ENCODE measurements at regions of chr10 and their contacts with region 1.

Region 1: GRCh38 chr10:114470956-114471905 is 66.9 kb upstream of the AFAP1L2 start:
- DNase-seq: peak; percentile 65 to 67 (median 66)
- H3K4me3 ChIP-seq: no peak overlapping the region
- H3K4me3 Mint-ChIP-seq: peak overlapping the region in 1 of 8 donors; percentile 18
- H3K27ac ChIP-seq: no peak overlapping the region
- H3K27ac Mint-ChIP-seq: peak overlapping the region; percentile 22 to 76 (median 47)
- H3K4me1 ChIP-seq: peaks cover 5% of the 10 kb centered on the region
- H3K4me1 Mint-ChIP-seq: peaks cover 13 to 24% (median 18%) of the 10 kb centered on the region in 4 donors
- H3K27me3 ChIP-seq: no peaks in the 10 kb centered on the region
- H3K27me3 Mint-ChIP-seq: no peaks in the 10 kb centered on the region

Region 2: DNA sequence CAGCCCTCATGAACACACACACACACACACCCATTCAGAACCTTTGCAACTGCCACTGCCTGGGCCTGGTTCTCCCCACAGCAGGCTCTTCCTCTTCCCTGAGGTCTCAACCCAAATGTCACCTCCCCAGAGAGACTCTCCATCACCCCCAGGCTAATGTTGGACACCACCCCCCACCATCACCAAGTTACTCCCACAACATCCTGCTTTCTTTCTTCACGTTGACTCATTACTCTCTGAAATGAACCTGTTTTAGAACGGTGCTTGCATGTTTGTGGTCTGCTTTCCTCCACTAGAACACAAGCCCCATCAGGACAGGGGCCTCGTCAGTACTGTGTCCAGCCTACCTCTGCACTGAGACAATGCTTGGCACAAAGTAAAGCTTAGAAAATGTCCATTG is 83.0 kb before region 1 on chr10:
- CTCF ChIA-PET with region 1: no interaction called
- POLR2A ChIA-PET with region 1: no interaction called
- intact Hi-C with region 1: no loop called
- DNase-seq: no peak
- H3K4me3 ChIP-seq: no peak overlapping the region
- H3K4me3 Mint-ChIP-seq: no peak overlapping the region
- H3K27ac ChIP-seq: no peak overlapping the region
- H3K27ac Mint-ChIP-seq: no peak overlapping the region
- H3K4me1 ChIP-seq: no peaks in the 10 kb centered on the region
- H3K4me1 Mint-ChIP-seq: peaks cover 0 to 2% (median 0%) of the 10 kb centered on the region in 4 donors
- H3K27me3 ChIP-seq: no peaks in the 10 kb centered on the region
- H3K27me3 Mint-ChIP-seq: peaks cover 17 to 22% of the 10 kb centered on the region in 2 donors

Region 3: GRCh38 chr10:114431414-114432135 is 39.7 kb before region 1 on chr10:
- CTCF ChIA-PET with region 1: no interaction called
- POLR2A ChIA-PET with region 1: no interaction called
- intact Hi-C with region 1: no loop called
- DNase-seq: no peak
- H3K4me3 ChIP-seq: no peak overlapping the region
- H3K4me3 Mint-ChIP-seq: no peak overlapping the region
- H3K27ac ChIP-seq: no peak overlapping the region
- H3K27ac Mint-ChIP-seq: peak overlapping the region in 3 of 7 donors; percentile 14 to 58 (median 18)
- H3K4me1 ChIP-seq: no peaks in the 10 kb centered on the region
- H3K4me1 Mint-ChIP-seq: peaks cover 0 to 3% (median 0%) of the 10 kb centered on the region in 4 donors
- H3K27me3 ChIP-seq: no peaks in the 10 kb centered on the region
- H3K27me3 Mint-ChIP-seq: no peaks in the 10 kb centered on the region

Region 4: GRCh38 chr10:114458955-114459354 is 12.3 kb before region 1 on chr10:
- CTCF ChIA-PET with region 1: interaction called, 19 read pairs
- POLR2A ChIA-PET with region 1: no interaction called
- intact Hi-C with region 1: no loop called
- DNase-seq: no peak
- H3K4me3 ChIP-seq: no peak overlapping the region
- H3K4me3 Mint-ChIP-seq: no peak overlapping the region
- H3K27ac ChIP-seq: no peak overlapping the region
- H3K27ac Mint-ChIP-seq: no peak overlapping the region
- H3K4me1 ChIP-seq: no peaks in the 10 kb centered on the region
- H3K4me1 Mint-ChIP-seq: peaks cover 2 to 5% (median 5%) of the 10 kb centered on the region in 4 donors
- H3K27me3 ChIP-seq: no peaks in the 10 kb centered on the region
- H3K27me3 Mint-ChIP-seq: no peaks in the 10 kb centered on the region

Region 5: DNA sequence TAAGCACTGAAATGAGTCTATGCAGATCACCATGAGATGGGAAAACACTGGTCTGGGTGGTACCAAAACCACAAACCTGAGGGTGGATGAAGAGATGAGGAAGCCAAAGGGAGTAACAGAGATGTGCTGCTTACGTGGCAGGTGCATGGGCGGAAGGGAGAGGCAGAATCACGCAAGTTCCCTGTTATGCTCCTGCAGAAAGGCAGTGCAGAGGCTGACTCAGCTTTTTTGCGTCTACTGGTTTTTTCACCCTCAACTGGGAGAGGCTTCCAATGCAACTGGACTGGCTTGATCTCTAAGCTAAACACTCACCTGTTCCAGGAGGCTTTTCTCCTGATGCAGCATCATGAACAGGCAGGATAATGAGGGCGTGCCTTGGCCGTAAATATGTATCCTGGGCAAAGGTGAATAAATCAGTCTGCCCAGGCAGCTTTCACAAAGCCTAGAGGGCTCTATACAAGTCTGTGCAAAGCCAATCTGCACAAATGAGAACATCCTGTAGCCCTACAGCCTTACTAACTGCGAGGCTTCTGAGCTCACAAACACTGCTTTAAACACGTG is 28.5 kb after region 1 on chr10:
- CTCF ChIA-PET with region 1: interaction called, 13 read pairs
- POLR2A ChIA-PET with region 1: no interaction called
- intact Hi-C with region 1: no loop called
- DNase-seq: peak; percentile 44 to 70 (median 59)
- H3K4me3 ChIP-seq: no peak overlapping the region
- H3K4me3 Mint-ChIP-seq: peak overlapping the region; percentile 36 to 75 (median 57)
- H3K27ac ChIP-seq: peak overlapping the region; percentile 49
- H3K27ac Mint-ChIP-seq: peak overlapping the region; percentile 70 to 93 (median 87)
- H3K4me1 ChIP-seq: peaks cover 82% of the 10 kb centered on the region
- H3K4me1 Mint-ChIP-seq: peaks cover 63 to 94% (median 82%) of the 10 kb centered on the region in 4 donors
- H3K27me3 ChIP-seq: no peaks in the 10 kb centered on the region
- H3K27me3 Mint-ChIP-seq: no peaks in the 10 kb centered on the region

Region 6: DNA sequence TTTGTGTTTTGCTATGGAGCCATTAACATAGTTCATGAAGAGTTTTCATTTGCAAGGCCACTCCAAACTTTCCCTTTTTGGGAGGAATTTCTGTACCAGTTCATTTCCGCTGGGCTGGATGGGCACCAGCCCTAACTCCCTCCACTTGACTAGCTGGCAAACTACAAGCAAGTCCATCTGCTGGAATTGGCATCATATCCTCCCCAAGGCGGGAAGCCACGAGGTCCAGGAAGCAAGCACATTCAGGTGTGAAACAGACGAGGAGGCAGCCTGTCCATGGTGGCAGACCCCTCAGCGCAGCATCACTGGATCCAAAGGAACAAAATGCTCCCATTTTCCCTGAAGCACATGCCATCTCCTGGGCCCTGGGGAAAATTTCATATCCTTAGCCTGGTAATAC is 61.0 kb after region 1 on chr10:
- CTCF ChIA-PET with region 1: interaction called, 62 read pairs
- POLR2A ChIA-PET with region 1: interaction called, 18 read pairs
- intact Hi-C with region 1: no loop called
- DNase-seq: no peak
- H3K4me3 ChIP-seq: no peak overlapping the region
- H3K4me3 Mint-ChIP-seq: no peak overlapping the region
- H3K27ac ChIP-seq: no peak overlapping the region
- H3K27ac Mint-ChIP-seq: no peak overlapping the region
- H3K4me1 ChIP-seq: peaks cover 19% of the 10 kb centered on the region
- H3K4me1 Mint-ChIP-seq: peaks cover 4 to 25% (median 17%) of the 10 kb centered on the region in 4 donors
- H3K27me3 ChIP-seq: no peaks in the 10 kb centered on the region
- H3K27me3 Mint-ChIP-seq: no peaks in the 10 kb centered on the region

Region 7: DNA sequence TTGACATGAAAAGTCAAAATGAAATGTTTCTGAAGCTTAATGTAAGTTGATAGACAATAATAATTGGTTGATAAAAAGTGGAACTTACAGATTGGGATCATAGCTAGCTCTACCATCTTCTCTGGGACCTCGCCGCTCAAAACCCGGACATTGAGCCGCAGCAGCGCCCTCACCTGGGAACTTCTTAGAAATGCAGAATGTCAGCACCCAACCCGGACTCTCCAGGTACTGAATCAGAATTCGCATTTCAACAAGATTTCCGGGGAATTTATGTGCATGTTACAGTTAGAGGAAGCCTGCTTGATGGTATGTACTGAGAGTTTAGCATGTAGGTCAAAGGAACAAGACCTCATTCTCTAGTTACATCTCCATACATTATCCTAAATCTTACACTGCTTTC is 223.5 kb after region 1 on chr10:
- CTCF ChIA-PET with region 1: interaction called, 31 read pairs
- POLR2A ChIA-PET with region 1: interaction called, 3 read pairs
- intact Hi-C with region 1: loop called (anchors 1 kb)
- DNase-seq: peak in 3 of 5 donors; percentile 12 to 18 (median 12)
- H3K4me3 ChIP-seq: no peak overlapping the region
- H3K4me3 Mint-ChIP-seq: peak overlapping the region in 1 of 8 donors; percentile 4
- H3K27ac ChIP-seq: no peak overlapping the region
- H3K27ac Mint-ChIP-seq: no peak overlapping the region
- H3K4me1 ChIP-seq: peaks cover 15% of the 10 kb centered on the region
- H3K4me1 Mint-ChIP-seq: peaks cover 0 to 11% (median 4%) of the 10 kb centered on the region in 4 donors
- H3K27me3 ChIP-seq: no peaks in the 10 kb centered on the region
- H3K27me3 Mint-ChIP-seq: peaks cover 5 to 7% of the 10 kb centered on the region in 2 donors

Region 8: GRCh38 chr10:114821293-114821914 is 350.2 kb after region 1 on chr10 and contains the start of gene FHIP2A:
- CTCF ChIA-PET with region 1: interaction called, 19 read pairs
- POLR2A ChIA-PET with region 1: interaction called, 10 read pairs
- intact Hi-C with region 1: no loop called
- DNase-seq: peak; percentile 71 to 91 (median 86)
- H3K4me3 ChIP-seq: peak within 1 kb of the TSS; percentile 59 to 66
- H3K4me3 Mint-ChIP-seq: peak within 1 kb of the TSS; percentile 91 to 96 (median 94)
- H3K27ac ChIP-seq: peak within 1 kb of the TSS; percentile 73
- H3K27ac Mint-ChIP-seq: peak within 1 kb of the TSS; percentile 92 to 96 (median 95)
- H3K4me1 ChIP-seq: peaks cover 42% of the 10 kb centered on the region
- H3K4me1 Mint-ChIP-seq: peaks cover 26 to 39% (median 33%) of the 10 kb centered on the region in 4 donors
- H3K27me3 ChIP-seq: no peaks in the 10 kb centered on the region
- H3K27me3 Mint-ChIP-seq: no peaks in the 10 kb centered on the region
- total RNA-seq, gene FHIP2A: 25.1 to 32.1 TPM